ENCODE measurements at regions of chr2 and their contacts with region 1.

Region 1: GRCh38 chr2:157194097-157194688 is 63.3 kb upstream of the GALNT5 start:
- DNase-seq: peak; percentile 47
- ATAC-seq: peak; percentile 74; the same call in 1 of the 2 replicates
- H3K4me3 ChIP-seq: no peak overlapping the region
- H3K27ac ChIP-seq: no peak overlapping the region
- H3K4me1 ChIP-seq: no peaks in the 10 kb centered on the region
- H3K27me3 ChIP-seq: no peaks in the 10 kb centered on the region
- CTCF ChIP-seq: peak; percentile 71; the same call in 1 of the 2 replicates

Region 2: DNA sequence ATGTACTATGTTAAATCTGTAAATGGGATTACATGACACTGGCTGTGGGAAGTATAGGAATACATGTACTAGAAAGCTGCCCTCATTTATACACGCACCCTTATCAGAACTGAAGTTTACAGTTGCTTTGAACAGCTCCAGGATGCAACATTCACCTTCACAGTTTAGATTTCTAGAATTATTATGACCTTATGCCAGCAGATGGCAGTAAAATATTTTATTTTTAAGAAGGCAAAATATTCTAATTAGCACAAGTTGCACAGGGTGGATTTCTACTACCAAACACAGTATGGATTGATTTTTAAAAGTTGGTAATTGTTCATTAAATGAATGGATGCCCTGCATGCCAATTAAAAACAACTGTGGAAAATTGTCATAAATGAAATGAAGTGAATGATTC is 1825.3 kb before region 1 on chr2:
- CTCF ChIA-PET with region 1: no interaction called
- POLR2A ChIA-PET with region 1: no interaction called
- in situ Hi-C with region 1: no loop called
- intact Hi-C with region 1: loop called (anchors 5 kb)
- DNase-seq: no peak
- ATAC-seq: 0 out of 2 replicates have a peak, but pooled peaks have one; percentile 51
- H3K4me3 ChIP-seq: no peak overlapping the region
- H3K27ac ChIP-seq: no peak overlapping the region
- H3K4me1 ChIP-seq: no peaks in the 10 kb centered on the region
- H3K27me3 ChIP-seq: no peaks in the 10 kb centered on the region
- CTCF ChIP-seq: peak; percentile 45; the same call in 1 of the 2 replicates

Region 3: GRCh38 chr2:156598581-156598980 is 595.6 kb before region 1 on chr2:
- CTCF ChIA-PET with region 1: no interaction called
- POLR2A ChIA-PET with region 1: no interaction called
- in situ Hi-C with region 1: no loop called
- intact Hi-C with region 1: loop called (anchors 5 kb)
- DNase-seq: no peak
- ATAC-seq: no peak
- H3K4me3 ChIP-seq: no peak overlapping the region
- H3K27ac ChIP-seq: no peak overlapping the region
- H3K4me1 ChIP-seq: no peaks in the 10 kb centered on the region
- H3K27me3 ChIP-seq: 0 out of 2 replicates have a peak, but pooled peaks cover 2% of the 10 kb centered on the region
- CTCF ChIP-seq: no peak

Measured in Panc1 (cell line).